Calu3 (cell line): ENCODE measurements at regions of chr19 and their contacts with region 1.

Region 1: DNA sequence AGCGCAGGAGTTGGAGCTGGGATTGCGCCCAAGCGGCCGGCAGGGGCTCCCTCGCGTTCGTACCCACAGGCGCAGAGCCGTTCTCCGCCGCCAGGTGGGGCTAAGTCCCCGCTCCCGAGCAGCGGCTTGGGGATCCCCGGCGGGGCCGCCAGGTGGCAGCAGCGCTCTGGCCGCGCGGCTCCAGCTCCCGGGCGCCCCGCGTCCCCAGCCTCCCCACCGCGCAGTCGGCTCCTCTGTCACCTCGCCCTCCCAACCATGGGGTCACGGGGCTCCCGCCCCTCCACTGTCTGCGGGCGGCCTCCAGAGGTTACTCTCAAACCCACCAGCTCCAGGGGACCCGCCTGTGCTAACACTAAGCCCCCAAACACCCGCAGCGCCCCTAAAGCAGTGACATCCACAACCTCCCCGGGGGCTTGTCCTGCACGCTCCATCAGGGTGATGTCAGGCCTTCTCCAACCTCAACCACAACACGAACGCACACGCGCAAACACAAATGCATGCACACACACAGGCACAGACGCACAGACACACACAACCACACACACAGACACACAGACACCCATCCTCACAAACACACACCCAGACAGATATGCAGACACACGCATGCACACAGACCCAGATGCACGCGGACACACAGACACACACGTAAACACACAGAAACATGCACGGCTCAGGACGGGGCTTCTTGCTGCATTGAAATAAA is 18.4 kb upstream of the KCTD15 start:
- DNase-seq: peak; percentile 93
- H3K4me3 Mint-ChIP-seq: no peak overlapping the region
- H3K27ac Mint-ChIP-seq: no peak overlapping the region
- H3K4me1 Mint-ChIP-seq: peaks cover 15% of the 10 kb centered on the region
- H3K27me3 Mint-ChIP-seq: peaks cover 88% of the 10 kb centered on the region
- CTCF ChIP-seq: peak; percentile 100

Region 2: GRCh38 chr19:33580026-33580644 is 198.1 kb before region 1 on chr19:
- CTCF ChIA-PET with region 1: interaction called, 10 read pairs
- intact Hi-C with region 1: no loop called
- DNase-seq: peak; percentile 81
- H3K4me3 Mint-ChIP-seq: peak overlapping the region; percentile 36
- H3K27ac Mint-ChIP-seq: peak overlapping the region; percentile 15
- H3K4me1 Mint-ChIP-seq: peaks cover 11% of the 10 kb centered on the region
- H3K27me3 Mint-ChIP-seq: peaks cover 35% of the 10 kb centered on the region
- CTCF ChIP-seq: no peak

Region 3: GRCh38 chr19:33998739-33999345 is 220.6 kb after region 1 on chr19:
- CTCF ChIA-PET with region 1: interaction called, 17 read pairs
- intact Hi-C with region 1: loop called (anchors 1 kb)
- DNase-seq: no peak
- H3K4me3 Mint-ChIP-seq: no peak overlapping the region
- H3K27ac Mint-ChIP-seq: no peak overlapping the region
- H3K4me1 Mint-ChIP-seq: no peaks in the 10 kb centered on the region
- H3K27me3 Mint-ChIP-seq: peaks cover 67% of the 10 kb centered on the region
- CTCF ChIP-seq: peak; percentile 32

Region 4: DNA sequence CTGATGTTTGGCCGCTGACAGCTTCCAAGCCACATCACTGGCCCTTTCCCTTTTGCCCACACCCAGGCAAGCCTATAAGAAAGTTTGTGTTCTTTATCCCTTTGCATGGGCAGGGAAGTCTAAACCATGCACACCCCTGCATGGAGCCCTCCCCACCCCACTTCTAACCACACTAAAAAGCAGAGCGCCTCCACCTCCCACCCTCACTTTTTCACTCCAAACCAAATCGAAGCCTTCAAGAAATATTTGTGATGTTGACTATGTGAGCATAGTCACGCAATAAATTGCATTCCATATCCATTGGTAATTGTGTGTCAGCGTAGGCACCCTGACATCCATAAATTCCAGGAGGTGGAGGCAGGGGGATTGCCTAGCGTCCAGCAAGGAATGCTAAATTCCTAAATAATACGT is 289.6 kb after region 1 on chr19:
- CTCF ChIA-PET with region 1: no interaction called
- intact Hi-C with region 1: no loop called
- DNase-seq: no peak
- H3K4me3 Mint-ChIP-seq: no peak overlapping the region
- H3K27ac Mint-ChIP-seq: no peak overlapping the region
- H3K4me1 Mint-ChIP-seq: no peaks in the 10 kb centered on the region
- H3K27me3 Mint-ChIP-seq: peaks cover 85% of the 10 kb centered on the region
- CTCF ChIP-seq: no peak

Region 5: DNA sequence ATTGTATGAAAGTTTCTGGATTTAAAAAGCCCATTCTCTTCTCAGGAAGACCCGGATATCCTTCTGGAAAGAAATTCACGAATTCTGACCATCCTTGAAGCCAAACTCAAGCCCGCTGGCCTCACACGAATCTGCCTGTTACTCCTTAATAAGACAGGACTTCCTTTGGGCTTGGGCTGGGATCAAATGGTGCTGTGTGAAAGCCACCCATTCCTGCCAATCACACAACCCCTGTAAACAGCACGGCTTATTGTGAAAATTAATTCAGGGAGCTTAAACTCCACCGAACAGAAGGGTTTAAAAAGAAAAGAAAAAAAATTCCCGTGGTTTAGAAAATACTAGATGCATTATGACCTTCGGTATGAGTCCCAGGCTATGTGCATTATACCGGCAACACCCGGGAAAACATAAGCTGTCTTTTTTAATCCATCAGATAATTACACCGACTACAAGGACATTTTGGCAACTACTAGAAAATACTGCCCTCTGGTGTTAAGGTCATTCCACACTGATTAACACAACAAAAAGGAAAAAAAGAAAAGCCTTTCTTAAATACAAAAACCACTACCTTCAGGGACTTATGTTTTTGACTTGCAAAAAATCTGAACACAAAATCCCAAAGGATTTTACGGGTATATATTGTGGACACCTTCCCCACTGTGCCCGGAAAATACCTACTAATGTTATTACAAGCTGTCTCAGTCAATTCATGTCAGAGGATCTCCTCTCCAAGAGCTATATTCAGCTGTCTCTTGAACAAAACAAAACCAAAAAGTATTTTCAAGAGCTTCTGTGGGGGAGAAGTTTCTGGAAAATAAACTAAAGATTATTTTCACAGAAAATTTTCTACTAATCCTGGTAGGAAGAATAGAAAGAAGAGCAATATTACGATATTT is 318.0 kb after region 1 on chr19:
- CTCF ChIA-PET with region 1: interaction called, 75 read pairs
- intact Hi-C with region 1: loop called (anchors 1 kb)
- DNase-seq: peak; percentile 20
- H3K4me3 Mint-ChIP-seq: no peak overlapping the region
- H3K27ac Mint-ChIP-seq: no peak overlapping the region
- H3K4me1 Mint-ChIP-seq: no peaks in the 10 kb centered on the region
- H3K27me3 Mint-ChIP-seq: peaks cover 69% of the 10 kb centered on the region
- CTCF ChIP-seq: peak; percentile 52

Region 6: GRCh38 chr19:34145741-34146202 is 367.5 kb after region 1 on chr19:
- CTCF ChIA-PET with region 1: interaction called, 4 read pairs
- intact Hi-C with region 1: loop called (anchors 5 kb)
- DNase-seq: peak; percentile 56
- H3K4me3 Mint-ChIP-seq: no peak overlapping the region
- H3K27ac Mint-ChIP-seq: no peak overlapping the region
- H3K4me1 Mint-ChIP-seq: no peaks in the 10 kb centered on the region
- H3K27me3 Mint-ChIP-seq: no peaks in the 10 kb centered on the region
- CTCF ChIP-seq: peak; percentile 83